AG04450 (cell line): ENCODE measurements at regions of chr11 and their contacts with region 1.

Region 1: DNA sequence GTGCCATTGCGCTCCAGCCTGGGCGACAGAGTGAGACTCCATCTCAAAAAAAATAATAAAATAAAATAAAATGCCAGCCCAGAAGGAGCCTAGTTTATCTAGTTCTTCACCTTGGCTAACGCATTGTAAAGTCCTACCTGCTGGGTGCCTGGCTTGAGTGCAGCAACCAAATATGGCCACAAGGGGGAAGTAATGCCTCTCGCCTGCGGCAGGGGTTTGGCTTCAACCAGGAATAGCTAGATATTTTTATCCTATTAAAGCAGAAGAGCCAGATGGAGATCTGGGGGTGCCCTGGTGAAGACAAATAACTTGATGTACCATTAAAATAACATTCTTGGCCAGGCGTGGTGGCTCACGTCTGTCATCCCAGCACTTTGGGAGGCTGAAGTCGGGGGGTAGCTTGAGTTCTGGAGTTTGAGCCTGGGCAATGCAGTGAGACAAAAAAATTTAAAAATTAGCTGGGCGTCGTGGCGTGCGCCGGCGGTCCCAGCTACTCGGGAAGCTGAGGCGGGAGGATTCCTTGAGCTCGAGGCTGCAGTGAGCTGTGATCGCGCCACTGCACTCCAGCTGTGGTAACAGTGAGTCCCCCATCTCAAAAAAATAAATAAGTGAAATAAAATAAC is 20.6 kb upstream of the PLEKHB1 start:
- DNase-seq: peak; percentile 23
- H3K4me3 ChIP-seq: no peak overlapping the region; the same call in 1 of the 2 replicates
- H3K27ac ChIP-seq: no peak overlapping the region
- H3K27me3 ChIP-seq: peaks cover 26% of the 10 kb centered on the region
- CTCF ChIP-seq: peak; percentile 94

Region 2: GRCh38 chr11:73414977-73415651 is 210.7 kb before region 1 on chr11:
- CTCF ChIA-PET with region 1: interaction called, 11 read pairs
- POLR2A ChIA-PET with region 1: no interaction called
- DNase-seq: no peak
- H3K4me3 ChIP-seq: no peak overlapping the region
- H3K27ac ChIP-seq: no peak overlapping the region
- H3K27me3 ChIP-seq: no peaks in the 10 kb centered on the region
- CTCF ChIP-seq: no peak

Region 3: GRCh38 chr11:73579641-73580434 is 46.0 kb before region 1 on chr11:
- CTCF ChIA-PET with region 1: interaction called, 10 read pairs
- POLR2A ChIA-PET with region 1: no interaction called
- DNase-seq: no peak
- H3K4me3 ChIP-seq: no peak overlapping the region
- H3K27ac ChIP-seq: no peak overlapping the region
- H3K27me3 ChIP-seq: no peaks in the 10 kb centered on the region
- CTCF ChIP-seq: no peak

Region 4: DNA sequence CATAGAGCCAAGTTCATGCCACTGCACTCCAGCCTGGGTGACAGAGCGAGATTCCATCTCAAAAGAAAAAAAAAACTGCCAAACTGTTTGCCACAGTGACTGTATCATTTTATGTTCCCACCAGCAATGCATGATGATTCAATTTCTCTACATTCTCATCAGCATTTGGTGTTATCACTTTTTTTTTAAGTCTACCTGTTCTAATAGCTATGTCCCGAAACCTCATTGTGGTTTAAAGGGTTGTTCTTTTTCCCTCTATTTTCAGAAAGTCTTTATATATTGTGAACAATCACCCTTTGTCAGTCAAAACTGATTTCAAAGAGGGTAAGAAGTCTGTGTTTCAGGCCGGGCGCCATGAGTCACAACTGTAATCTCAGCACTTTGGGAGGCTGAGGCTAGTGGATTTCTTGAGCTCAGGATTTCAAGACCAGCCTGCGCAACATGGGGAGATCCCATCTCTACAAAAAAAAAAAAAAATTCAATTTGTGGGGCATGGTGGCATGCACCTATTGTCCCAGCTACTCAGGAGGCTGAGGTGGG is 13.1 kb before region 1 on chr11:
- CTCF ChIA-PET with region 1: interaction called, 23 read pairs
- POLR2A ChIA-PET with region 1: no interaction called
- DNase-seq: no peak
- H3K4me3 ChIP-seq: no peak overlapping the region
- H3K27ac ChIP-seq: no peak overlapping the region
- H3K27me3 ChIP-seq: peaks cover 2% of the 10 kb centered on the region
- CTCF ChIP-seq: no peak

Region 5: GRCh38 chr11:73647459-73648100 is 21.8 kb after region 1 on chr11:
- CTCF ChIA-PET with region 1: interaction called, 12 read pairs
- POLR2A ChIA-PET with region 1: no interaction called
- DNase-seq: peak; percentile 30
- H3K4me3 ChIP-seq: peak overlapping the region; percentile 46
- H3K27ac ChIP-seq: no peak overlapping the region
- H3K27me3 ChIP-seq: peaks cover 14% of the 10 kb centered on the region
- CTCF ChIP-seq: no peak

Region 6: DNA sequence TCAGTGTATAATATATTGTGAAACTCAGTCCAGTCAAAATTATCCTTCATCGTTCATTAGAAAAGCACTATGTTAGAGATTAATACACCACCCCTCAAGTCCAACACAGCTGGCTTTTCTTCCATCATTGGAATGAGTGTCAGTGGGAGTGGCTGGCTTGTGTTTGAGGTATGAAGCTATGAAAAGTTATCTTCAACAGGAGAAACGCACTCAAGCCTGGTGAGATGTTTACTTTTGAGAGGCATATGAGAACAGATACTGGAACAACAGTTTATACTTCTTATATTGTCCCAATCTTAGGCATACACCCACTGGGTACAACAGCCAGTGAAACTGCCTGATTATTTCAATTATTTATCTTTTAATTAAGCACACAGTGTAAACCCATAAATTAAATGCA is 54.9 kb after region 1 on chr11:
- CTCF ChIA-PET with region 1: interaction called, 10 read pairs
- POLR2A ChIA-PET with region 1: no interaction called
- DNase-seq: no peak
- H3K4me3 ChIP-seq: no peak overlapping the region
- H3K27ac ChIP-seq: no peak overlapping the region
- H3K27me3 ChIP-seq: no peaks in the 10 kb centered on the region
- CTCF ChIP-seq: no peak